Activated CD8-positive, alpha-beta T cell treated with anti-CD3 and anti-CD28 coated beads, Interleukin-2, amount 10 ng/mL, durations not matched to agents 7 days and 5 days (primary cell): ENCODE measurements at regions of chr14 and their contacts with region 1.

Region 1: GRCh38 chr14:91114079-91115065 is 499 bp downstream of the DGLUCY start:
- DNase-seq: peak; percentile 86
- ATAC-seq: peak; percentile 81
- H3K4me3 Mint-ChIP-seq: peak overlapping the region; percentile 93
- H3K27ac Mint-ChIP-seq: peak overlapping the region; percentile 91
- H3K4me1 Mint-ChIP-seq: peaks cover 68% of the 10 kb centered on the region
- H3K27me3 Mint-ChIP-seq: no peaks in the 10 kb centered on the region

Region 2: GRCh38 chr14:90903101-90903500 is 211.3 kb before region 1 on chr14:
- CTCF ChIA-PET with region 1: interaction called, 41 read pairs
- POLR2A ChIA-PET with region 1: interaction called, 10 read pairs
- DNase-seq: peak; percentile 78
- ATAC-seq: peak; percentile 89
- H3K4me3 Mint-ChIP-seq: no peak overlapping the region
- H3K27ac Mint-ChIP-seq: peak overlapping the region; percentile 30
- H3K4me1 Mint-ChIP-seq: peaks cover 27% of the 10 kb centered on the region
- H3K27me3 Mint-ChIP-seq: no peaks in the 10 kb centered on the region

Region 3: DNA sequence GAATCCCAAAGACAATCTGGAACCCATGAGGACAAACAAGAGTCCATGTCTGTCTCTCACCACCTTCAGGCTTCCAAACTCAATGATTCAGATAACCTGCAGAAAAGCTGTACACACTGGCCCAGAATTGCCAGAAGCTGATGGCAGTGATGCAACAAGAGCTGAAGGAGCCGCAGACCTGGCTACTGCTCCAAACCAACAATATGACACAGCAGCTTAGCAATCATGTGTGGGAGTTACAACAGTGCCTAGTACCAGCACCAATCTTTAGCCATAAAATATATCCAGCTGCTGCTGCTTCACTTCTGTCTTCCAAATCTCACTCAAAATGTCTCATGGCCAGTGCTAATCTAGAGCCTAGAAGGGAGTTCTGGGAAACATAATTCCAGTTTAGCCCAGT is 75.9 kb before region 1 on chr14:
- CTCF ChIA-PET with region 1: interaction called, 11 read pairs
- POLR2A ChIA-PET with region 1: interaction called, 11 read pairs
- DNase-seq: peak; percentile 17
- ATAC-seq: no peak
- H3K4me3 Mint-ChIP-seq: no peak overlapping the region
- H3K27ac Mint-ChIP-seq: no peak overlapping the region
- H3K4me1 Mint-ChIP-seq: peaks cover 60% of the 10 kb centered on the region
- H3K27me3 Mint-ChIP-seq: no peaks in the 10 kb centered on the region

Region 4: GRCh38 chr14:91068642-91069041 is 45.7 kb before region 1 on chr14:
- CTCF ChIA-PET with region 1: interaction called, 17 read pairs
- POLR2A ChIA-PET with region 1: interaction called, 203 read pairs
- DNase-seq: peak; percentile 42
- ATAC-seq: peak; percentile 44
- H3K4me3 Mint-ChIP-seq: peak overlapping the region; percentile 48
- H3K27ac Mint-ChIP-seq: peak overlapping the region; percentile 89
- H3K4me1 Mint-ChIP-seq: peaks cover 74% of the 10 kb centered on the region
- H3K27me3 Mint-ChIP-seq: no peaks in the 10 kb centered on the region

Region 5: GRCh38 chr14:91138511-91139359 is 24.4 kb after region 1 on chr14:
- CTCF ChIA-PET with region 1: interaction called, 21 read pairs
- POLR2A ChIA-PET with region 1: interaction called, 13 read pairs
- DNase-seq: peak; percentile 71
- ATAC-seq: peak; percentile 38
- H3K4me3 Mint-ChIP-seq: no peak overlapping the region
- H3K27ac Mint-ChIP-seq: peak overlapping the region; percentile 23
- H3K4me1 Mint-ChIP-seq: peaks cover 63% of the 10 kb centered on the region
- H3K27me3 Mint-ChIP-seq: no peaks in the 10 kb centered on the region